HEK293 (cell line): ENCODE measurements at regions of chr1 and their contacts with region 1.

Region 1: GRCh38 chr1:43414634-43415223 is 25.0 kb downstream of the SZT2 start:
- H3K4me3 ChIP-seq: no peak overlapping the region
- H3K27ac ChIP-seq: no peak overlapping the region
- H3K4me1 ChIP-seq: no peaks in the 10 kb centered on the region
- CTCF ChIP-seq: peak; percentile 45; the same call in 1 of the 2 replicates

Region 2: DNA sequence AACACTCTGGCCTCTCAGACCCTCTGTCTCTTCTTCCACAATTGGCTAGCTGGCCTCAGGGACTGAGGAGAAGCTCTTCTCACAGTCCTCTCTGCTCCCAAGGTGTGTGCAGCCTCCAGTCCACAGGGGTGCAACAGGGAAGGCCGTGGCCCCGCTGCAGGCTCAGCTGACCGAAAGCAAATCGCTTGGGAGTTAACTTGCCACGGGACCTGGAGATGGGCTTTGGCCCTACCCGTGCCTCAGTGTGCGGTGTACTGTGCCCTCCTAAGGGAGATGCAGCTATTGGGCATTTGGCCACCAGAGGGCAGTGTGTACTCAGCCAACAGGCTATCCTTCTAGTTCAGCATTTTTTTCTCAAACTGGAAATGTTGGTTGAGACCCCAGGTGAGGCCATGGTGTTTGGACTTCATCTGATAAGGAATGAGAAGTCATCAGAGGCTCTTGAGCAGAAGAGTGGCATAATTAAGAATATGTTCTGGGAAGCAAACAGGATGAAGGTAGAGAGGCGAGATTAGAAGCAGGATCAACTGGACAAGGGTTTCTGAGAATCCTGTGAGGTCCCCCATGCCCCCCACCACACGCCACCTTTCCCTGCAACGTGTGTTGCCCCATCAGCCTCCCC is 187.5 kb before region 1 on chr1:
- CTCF ChIA-PET with region 1: interaction called, 110 read pairs
- POLR2A ChIA-PET with region 1: interaction called, 3 read pairs
- H3K4me3 ChIP-seq: no peak overlapping the region
- H3K27ac ChIP-seq: no peak overlapping the region
- H3K4me1 ChIP-seq: no peaks in the 10 kb centered on the region
- CTCF ChIP-seq: peak; percentile 88

Region 3: GRCh38 chr1:43238085-43238484 is 176.6 kb before region 1 on chr1:
- CTCF ChIA-PET with region 1: interaction called, 110 read pairs
- POLR2A ChIA-PET with region 1: no interaction called
- H3K4me3 ChIP-seq: no peak overlapping the region
- H3K27ac ChIP-seq: no peak overlapping the region
- H3K4me1 ChIP-seq: no peaks in the 10 kb centered on the region
- CTCF ChIP-seq: peak; percentile 46; the same call in 1 of the 2 replicates

Region 4: DNA sequence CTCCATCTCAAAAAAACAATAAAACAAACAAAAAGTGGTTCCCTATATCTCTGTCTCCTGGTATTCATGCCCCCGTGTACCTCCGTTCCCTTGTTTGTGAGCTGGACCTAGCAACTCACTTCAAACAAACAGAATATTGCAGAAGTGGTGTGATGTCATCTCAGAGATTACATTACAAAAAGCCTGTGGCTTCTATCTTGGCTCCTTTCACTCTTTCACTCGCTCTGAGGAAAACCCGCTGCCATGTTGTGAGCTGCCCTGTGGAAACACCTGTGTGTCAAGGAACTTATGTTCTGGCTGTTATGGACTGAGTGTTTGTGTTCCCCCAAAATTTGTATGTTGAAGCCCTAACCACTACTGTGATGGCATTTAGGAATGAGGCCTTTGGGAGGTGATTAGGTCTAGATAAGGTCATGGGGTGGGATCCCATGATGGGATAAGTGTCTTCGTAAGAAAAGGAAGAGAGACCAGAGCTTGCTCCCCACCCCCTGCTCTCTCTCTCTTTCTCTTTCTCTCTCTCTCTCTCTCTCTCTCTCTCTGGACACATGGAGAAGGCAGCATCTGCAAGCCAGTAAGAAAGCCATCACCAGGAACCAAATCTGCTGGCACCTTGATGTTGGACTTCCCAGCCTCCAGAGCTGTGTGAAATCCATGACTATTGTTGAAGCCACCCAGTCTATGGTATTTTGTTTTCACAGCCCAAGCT is 46.4 kb after region 1 on chr1:
- CTCF ChIA-PET with region 1: no interaction called
- POLR2A ChIA-PET with region 1: no interaction called
- H3K4me3 ChIP-seq: no peak overlapping the region
- H3K27ac ChIP-seq: no peak overlapping the region
- H3K4me1 ChIP-seq: no peaks in the 10 kb centered on the region
- CTCF ChIP-seq: no peak